Ovary (tissue), 10 donors: ENCODE measurements at regions of chr2 and their contacts with region 1.

Region 1: DNA sequence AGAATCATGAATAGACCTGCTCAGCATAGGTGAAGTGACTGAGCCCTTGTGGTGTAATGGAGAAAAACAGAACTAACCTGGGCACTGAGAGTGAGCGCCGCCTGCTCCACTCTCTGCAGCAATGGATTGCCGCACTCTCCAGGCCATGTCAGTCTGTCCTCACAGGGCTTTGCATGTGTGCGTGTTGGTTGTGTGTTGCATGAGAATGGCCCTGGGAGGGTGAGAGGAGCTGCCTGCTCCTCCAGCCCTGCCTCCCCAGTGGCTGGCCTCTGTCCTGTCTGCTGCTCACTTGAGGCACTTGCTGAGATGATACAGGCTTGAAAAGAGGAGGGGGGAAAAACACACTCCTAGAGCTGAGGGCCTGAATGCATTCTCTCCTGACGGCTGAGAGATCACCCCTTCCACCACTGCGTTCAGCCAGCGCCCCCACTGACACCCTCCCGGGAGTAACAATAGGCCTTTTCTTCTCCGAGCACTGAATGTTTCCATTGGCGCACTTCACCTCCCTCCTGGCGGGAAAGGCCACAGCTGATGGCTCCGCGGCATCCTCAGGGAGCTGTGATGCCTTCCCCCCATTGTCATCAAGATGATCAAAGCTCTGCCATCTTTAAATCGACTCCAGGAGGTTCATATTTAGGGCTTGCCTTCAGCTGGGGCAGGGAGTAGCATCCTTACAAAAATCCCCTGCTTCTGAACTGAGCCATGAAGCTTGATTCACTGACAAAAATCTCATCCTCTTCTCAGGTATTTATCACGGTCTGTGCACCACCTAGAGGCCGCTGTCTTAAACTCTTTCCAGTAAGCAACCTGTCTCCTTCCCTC is 49.9 kb upstream of the DAPL1 start:
- DNase-seq: peak; percentile 54 to 70 (median 67)
- H3K4me3 ChIP-seq: no peak overlapping the region
- H3K27ac ChIP-seq: no peak overlapping the region
- H3K4me1 ChIP-seq: peaks cover 15% of the 10 kb centered on the region
- H3K27me3 ChIP-seq: no peaks in the 10 kb centered on the region
- CTCF ChIP-seq: peak in 1 of 3 donors; percentile 26
- EP300 ChIP-seq: no peak
- POLR2A ChIP-seq: no peak

Region 2: DNA sequence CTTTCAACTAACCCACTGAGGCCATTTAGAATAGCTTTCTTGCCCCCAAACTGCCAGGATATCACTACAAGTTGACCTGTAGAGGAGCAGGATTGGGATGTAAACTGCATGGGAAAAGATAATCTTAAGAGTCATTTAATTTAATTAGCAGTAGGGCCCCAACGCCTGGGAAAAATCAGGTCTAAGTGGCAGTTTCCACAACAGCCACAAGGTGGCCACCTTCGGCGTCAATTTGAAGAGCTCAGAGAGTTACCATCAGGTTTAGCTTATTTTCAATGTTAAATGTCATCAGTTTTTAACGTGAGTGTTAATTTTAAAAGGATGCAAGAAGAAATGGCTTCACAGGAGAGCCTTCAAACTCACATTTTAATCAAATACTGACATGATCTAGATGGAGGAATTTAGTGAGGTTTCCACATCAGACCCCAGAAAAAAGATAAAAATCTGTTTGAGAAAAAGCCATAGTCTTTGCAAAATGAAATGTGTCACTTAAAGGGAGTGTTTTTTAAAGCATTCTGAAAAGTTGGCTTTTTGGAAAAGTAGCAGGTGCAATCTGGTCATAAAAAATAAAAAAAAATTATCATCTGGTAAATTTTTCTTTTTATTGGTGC is 720.9 kb before region 1 on chr2:
- intact Hi-C with region 1: loop called (anchors 5 to 10 kb)
- DNase-seq: peak in 4 of 5 donors; percentile 31 to 54 (median 46)
- H3K4me3 ChIP-seq: no peak overlapping the region
- H3K27ac ChIP-seq: no peak overlapping the region
- H3K4me1 ChIP-seq: no peaks in the 10 kb centered on the region
- H3K27me3 ChIP-seq: no peaks in the 10 kb centered on the region
- CTCF ChIP-seq: peak; percentile 12 to 55 (median 45)
- EP300 ChIP-seq: no peak
- POLR2A ChIP-seq: no peak

Region 3: DNA sequence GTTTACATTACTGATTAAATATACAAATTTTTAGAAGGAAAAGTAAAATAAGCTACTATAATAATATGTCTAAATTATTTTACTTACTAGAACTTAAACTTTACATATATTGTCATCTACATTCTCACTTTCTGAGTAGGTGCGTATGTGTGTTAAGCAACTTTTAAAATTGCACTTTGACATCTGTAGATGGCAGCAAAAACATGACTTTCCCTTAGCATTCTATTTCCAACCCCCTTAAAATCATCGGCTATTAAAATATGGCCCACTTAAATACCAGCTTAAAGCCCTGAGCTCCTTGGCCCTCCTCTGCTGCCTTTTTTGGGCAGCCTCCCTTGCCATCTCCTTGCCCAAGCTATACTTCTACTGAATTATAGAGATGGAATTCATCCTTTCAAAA is 565.6 kb before region 1 on chr2:
- intact Hi-C with region 1: loop called in 2 of 4 experiments (anchors 10 kb)
- DNase-seq: no peak
- H3K4me3 ChIP-seq: no peak overlapping the region
- H3K27ac ChIP-seq: no peak overlapping the region
- H3K4me1 ChIP-seq: no peaks in the 10 kb centered on the region
- H3K27me3 ChIP-seq: no peaks in the 10 kb centered on the region
- CTCF ChIP-seq: no peak
- EP300 ChIP-seq: no peak
- POLR2A ChIP-seq: no peak

Region 4: GRCh38 chr2:158456309-158457066 is 288.8 kb before region 1 on chr2 and contains the starts of genes CCDC148 and PKP4:
- intact Hi-C with region 1: loop called in 3 of 4 experiments (anchors 5 to 10 kb)
- DNase-seq: peak; percentile 87 to 92 (median 91)
- H3K4me3 ChIP-seq: peak within 1 kb of the TSS; percentile 71
- H3K27ac ChIP-seq: peak within 1 kb of the TSS; percentile 80 to 90
- H3K4me1 ChIP-seq: peaks cover 1% of the 10 kb centered on the region
- H3K27me3 ChIP-seq: no peaks in the 10 kb centered on the region
- CTCF ChIP-seq: peak in 2 of 3 donors; percentile 8 to 32
- EP300 ChIP-seq: no peak
- POLR2A ChIP-seq: peak; percentile 53
- total RNA-seq, gene CCDC148: 2.4 to 6.6 (median 3.6) TPM
- total RNA-seq, gene PKP4: 35.8 to 60.9 (median 46.6) TPM

Region 5: GRCh38 chr2:158667586-158667985 is 77.7 kb before region 1 on chr2:
- intact Hi-C with region 1: no loop called
- DNase-seq: no peak
- H3K4me3 ChIP-seq: no peak overlapping the region
- H3K27ac ChIP-seq: peak overlapping the region in 1 of 2 donors; percentile 41
- H3K4me1 ChIP-seq: peaks cover 6% of the 10 kb centered on the region
- H3K27me3 ChIP-seq: no peaks in the 10 kb centered on the region
- CTCF ChIP-seq: no peak
- EP300 ChIP-seq: no peak
- POLR2A ChIP-seq: no peak

Region 6: GRCh38 chr2:159076241-159076640 is 331.0 kb after region 1 on chr2:
- intact Hi-C with region 1: no loop called
- DNase-seq: peak in 1 of 5 donors; percentile 26
- H3K4me3 ChIP-seq: no peak overlapping the region
- H3K27ac ChIP-seq: no peak overlapping the region
- H3K4me1 ChIP-seq: peaks cover 4% of the 10 kb centered on the region
- H3K27me3 ChIP-seq: no peaks in the 10 kb centered on the region
- CTCF ChIP-seq: no peak
- EP300 ChIP-seq: no peak
- POLR2A ChIP-seq: no peak